ENCODE measurements at regions of chr1 and their contacts with region 1.

Region 1: GRCh38 chr1:41496080-41497055 is 11.9 kb upstream of the EDN2 start:
- DNase-seq: peak; percentile 63
- H3K4me3 Mint-ChIP-seq: peak overlapping the region; percentile 53
- H3K27ac Mint-ChIP-seq: no peak overlapping the region
- H3K4me1 Mint-ChIP-seq: peaks cover 7% of the 10 kb centered on the region
- H3K27me3 Mint-ChIP-seq: peaks cover 17% of the 10 kb centered on the region

Region 2: GRCh38 chr1:41662765-41663437 is 166.5 kb after region 1 on chr1:
- CTCF ChIA-PET with region 1: no interaction called
- intact Hi-C with region 1: no loop called
- DNase-seq: no peak
- H3K4me3 Mint-ChIP-seq: peak overlapping the region; percentile 58
- H3K27ac Mint-ChIP-seq: peak overlapping the region; percentile 73
- H3K4me1 Mint-ChIP-seq: peaks cover 77% of the 10 kb centered on the region
- H3K27me3 Mint-ChIP-seq: no peaks in the 10 kb centered on the region

Region 3: DNA sequence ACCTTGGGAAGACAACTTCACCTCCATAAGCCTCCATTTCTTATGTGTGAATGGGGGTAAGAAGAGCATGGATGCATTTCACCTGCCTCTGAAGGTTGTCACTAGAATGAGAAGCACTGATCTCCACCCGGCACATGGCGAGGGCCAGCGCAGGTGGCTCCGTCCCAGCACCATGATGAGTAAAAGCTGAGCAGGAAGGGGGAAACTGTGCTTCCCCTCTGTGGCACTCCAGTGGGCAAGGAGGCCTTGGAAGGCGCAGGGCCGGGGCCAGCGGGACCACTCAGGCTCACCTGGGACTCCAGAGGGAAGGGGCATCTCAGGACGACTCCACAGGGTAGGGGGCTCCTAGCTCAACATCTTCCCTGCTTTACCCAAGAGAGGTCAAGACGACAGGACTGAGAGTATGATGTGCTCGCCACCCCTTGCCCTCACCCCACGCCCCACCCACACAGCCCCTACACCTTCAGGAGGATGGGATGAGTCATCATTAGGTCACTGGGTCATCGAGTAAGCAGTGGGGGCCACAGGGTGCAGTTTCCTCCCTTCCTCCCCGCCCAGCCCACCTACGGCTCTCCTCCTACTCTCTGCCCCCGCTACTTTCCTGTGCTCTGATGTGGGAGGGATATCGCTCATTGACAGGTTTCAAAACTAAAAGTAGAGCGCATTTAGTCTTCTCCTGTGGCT is 310.2 kb after region 1 on chr1:
- CTCF ChIA-PET with region 1: interaction called, 3 read pairs
- intact Hi-C with region 1: loop called (anchors 5 kb)
- DNase-seq: peak; percentile 71
- H3K4me3 Mint-ChIP-seq: peak overlapping the region; percentile 31
- H3K27ac Mint-ChIP-seq: peak overlapping the region; percentile 86
- H3K4me1 Mint-ChIP-seq: peaks cover 89% of the 10 kb centered on the region
- H3K27me3 Mint-ChIP-seq: no peaks in the 10 kb centered on the region